H1 (cell line): ENCODE measurements at regions of chr5 and their contacts with region 1.

Region 1: GRCh38 chr5:157189223-157189622 is 8.6 kb downstream of the ITK start:
- DNase-seq: no peak
- H3K4me3 ChIP-seq: no peak overlapping the region
- H3K27ac ChIP-seq: no peak overlapping the region
- H3K4me1 ChIP-seq: no peaks in the 10 kb centered on the region
- H3K27me3 ChIP-seq: peaks cover 1 to 29% (median 12%) of the 10 kb centered on the region in 4 experiments
- CTCF ChIP-seq: no peak
- EP300 ChIP-seq: no peak
- POLR2A ChIP-seq: no peak
- RAD21 ChIP-seq: no peak

Region 2: DNA sequence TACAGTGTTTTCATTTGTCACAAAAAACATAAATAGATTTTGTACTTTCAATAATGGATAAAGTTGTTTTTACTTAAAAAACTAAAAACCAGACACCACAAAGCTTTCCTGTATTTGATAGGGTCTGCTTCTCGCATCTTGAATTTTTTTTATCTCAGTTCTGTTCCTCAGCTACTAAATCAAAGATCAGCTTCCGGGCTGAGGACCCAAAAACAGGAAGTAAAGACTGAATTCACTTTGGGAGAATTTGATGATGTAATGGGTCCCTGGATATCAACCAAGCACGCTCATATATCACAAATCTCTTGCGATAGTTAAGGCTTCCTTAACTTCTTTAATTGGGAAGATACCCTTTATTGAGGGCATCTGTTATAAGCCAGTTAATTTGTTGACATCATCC is 15.5 kb after region 1 on chr5:
- CTCF ChIA-PET with region 1: interaction called, 10 read pairs
- POLR2A ChIA-PET with region 1: no interaction called
- DNase-seq: no peak
- H3K4me3 ChIP-seq: no peak overlapping the region
- H3K27ac ChIP-seq: no peak overlapping the region
- H3K4me1 ChIP-seq: no peaks in the 10 kb centered on the region
- H3K27me3 ChIP-seq: no peaks in the 10 kb centered on the region
- CTCF ChIP-seq: no peak
- EP300 ChIP-seq: no peak
- POLR2A ChIP-seq: no peak
- RAD21 ChIP-seq: no peak